Naive thymus-derived CD4-positive, alpha-beta T cell (primary cell): ENCODE measurements at regions of chr1 and their contacts with region 1.

Region 1: GRCh38 chr1:107954719-107955415 is 10.1 kb downstream of the VAV3 start:
- DNase-seq: no peak
- ATAC-seq: peak; percentile 20
- H3K4me3 ChIP-seq: no peak overlapping the region
- H3K4me3 Mint-ChIP-seq: no peak overlapping the region
- H3K27ac ChIP-seq: no peak overlapping the region
- H3K27ac Mint-ChIP-seq: no peak overlapping the region
- H3K4me1 ChIP-seq: peaks cover 0 to 29% of the 10 kb centered on the region in 2 donors
- H3K4me1 Mint-ChIP-seq: peaks cover 7 to 45% (median 28%) of the 10 kb centered on the region in 7 donors
- H3K27me3 ChIP-seq: no peaks in the 10 kb centered on the region
- H3K27me3 Mint-ChIP-seq: no peaks in the 10 kb centered on the region

Region 2: DNA sequence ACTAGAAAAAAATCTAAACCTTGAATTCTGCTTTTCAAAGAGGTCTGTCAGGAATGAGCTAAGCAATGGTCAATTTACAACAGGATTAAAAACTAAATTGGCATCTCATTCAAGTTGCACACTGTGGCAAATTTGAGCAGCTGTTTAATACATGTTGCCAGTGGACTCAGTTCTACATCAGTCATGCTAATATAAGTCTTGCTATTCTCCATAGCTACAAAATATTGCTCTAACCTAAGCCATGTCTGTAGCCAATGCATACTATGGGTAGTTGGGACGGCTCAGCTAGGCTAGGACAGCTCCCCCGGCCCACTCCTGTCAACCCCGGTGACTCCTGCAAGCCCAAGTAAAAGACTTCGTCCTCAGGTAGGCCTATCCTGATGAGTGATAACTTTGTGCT is 21.0 kb after region 1 on chr1:
- CTCF ChIA-PET with region 1: no interaction called
- POLR2A ChIA-PET with region 1: no interaction called
- intact Hi-C with region 1: loop called in 1 of 2 experiments (anchors 2 kb)
- DNase-seq: no peak
- ATAC-seq: no peak
- H3K4me3 ChIP-seq: no peak overlapping the region
- H3K4me3 Mint-ChIP-seq: no peak overlapping the region
- H3K27ac ChIP-seq: no peak overlapping the region
- H3K27ac Mint-ChIP-seq: no peak overlapping the region
- H3K4me1 ChIP-seq: no peaks in the 10 kb centered on the region
- H3K4me1 Mint-ChIP-seq: peaks cover 0 to 2% (median 0%) of the 10 kb centered on the region in 7 donors
- H3K27me3 ChIP-seq: no peaks in the 10 kb centered on the region
- H3K27me3 Mint-ChIP-seq: peaks cover 0 to 21% (median 0%) of the 10 kb centered on the region in 5 donors